ENCODE measurements at regions of chr3 and their contacts with region 1.

Region 1: GRCh38 chr3:186551387-186551786 is 7.2 kb upstream of the CRYGS start:
- DNase-seq: no peak
- ATAC-seq: no peak

Region 2: DNA sequence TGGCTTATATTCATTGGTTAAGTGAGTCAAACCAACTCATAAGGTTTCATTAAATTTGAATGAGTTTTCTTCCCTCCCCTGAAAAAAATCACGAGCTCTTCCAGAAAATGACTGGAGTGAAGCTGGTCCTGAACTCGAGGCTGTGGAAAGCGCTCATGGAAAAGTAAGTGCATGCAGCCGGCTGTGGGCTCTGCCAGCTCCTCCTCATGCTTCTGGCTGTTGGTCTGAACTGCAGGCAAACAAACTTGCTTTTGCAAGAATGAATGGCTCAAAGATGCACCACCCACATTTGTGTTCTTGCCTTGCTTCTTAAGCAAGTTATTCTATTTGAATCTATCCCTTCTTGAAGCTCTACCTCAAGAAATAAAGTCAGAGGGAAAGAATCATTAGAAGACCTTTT is 448.7 kb before region 1 on chr3:
- intact Hi-C with region 1: loop called (anchors 5 kb)
- DNase-seq: no peak
- ATAC-seq: no peak

Region 3: GRCh38 chr3:186589121-186589520 is 37.7 kb after region 1 on chr3:
- intact Hi-C with region 1: no loop called
- DNase-seq: no peak
- ATAC-seq: no peak

Region 4: DNA sequence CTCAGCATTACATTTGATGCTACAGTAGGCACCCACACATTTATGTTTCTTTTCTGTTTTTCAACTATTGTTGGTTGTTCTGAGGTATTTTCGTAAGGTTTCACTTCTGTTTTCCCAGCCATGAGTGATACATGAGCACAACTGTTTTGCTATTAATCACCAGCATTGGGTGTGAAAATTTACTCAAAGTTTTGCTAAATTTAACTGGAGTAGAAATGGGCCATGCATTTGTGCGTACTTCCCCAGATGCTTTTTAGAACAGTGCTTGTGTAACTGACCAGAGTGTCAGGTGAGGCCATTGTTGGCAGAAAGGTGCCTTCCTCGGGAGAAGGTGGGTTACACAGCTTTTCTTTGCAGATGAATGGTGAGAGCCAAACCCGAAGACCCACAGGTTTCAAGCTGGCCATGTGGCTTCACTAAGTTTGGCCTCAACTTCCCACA is 449.3 kb after region 1 on chr3:
- intact Hi-C with region 1: no loop called
- DNase-seq: peak; percentile 43
- ATAC-seq: peak; percentile 27